ENCODE measurements at regions of chr1 and their contacts with region 1.

Region 1: GRCh38 chr1:228393248-228393699 is 13.4 kb downstream of the TRIM11 start:
- DNase-seq: peak; percentile 82
- H3K4me3 Mint-ChIP-seq: no peak overlapping the region
- H3K27ac Mint-ChIP-seq: peak overlapping the region; percentile 75
- H3K4me1 Mint-ChIP-seq: peaks cover 17% of the 10 kb centered on the region
- H3K27me3 Mint-ChIP-seq: no peaks in the 10 kb centered on the region
- CTCF ChIP-seq: peak; percentile 64

Region 2: DNA sequence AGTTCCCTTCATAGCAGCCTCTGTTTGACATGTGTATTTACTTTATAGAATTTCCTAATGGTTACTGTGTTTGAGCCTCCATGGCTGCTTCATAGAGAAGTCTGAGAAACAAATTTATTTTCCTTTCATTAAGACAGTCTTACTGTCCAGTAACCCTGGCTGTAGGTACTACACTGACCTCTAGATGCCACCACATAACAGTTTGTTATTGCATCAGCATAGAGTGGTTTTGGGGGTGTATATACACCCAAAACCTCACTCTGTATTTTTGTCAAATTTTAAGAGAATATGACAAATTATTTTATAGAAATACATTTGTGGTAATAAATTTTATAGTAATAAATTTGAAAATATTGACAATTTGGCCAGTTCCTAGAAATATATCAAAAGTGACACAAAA is 128.1 kb before region 1 on chr1:
- CTCF ChIA-PET with region 1: interaction called, 3 read pairs
- POLR2A ChIA-PET with region 1: no interaction called
- intact Hi-C with region 1: loop called (anchors 5 kb)
- DNase-seq: peak; percentile 48
- H3K4me3 Mint-ChIP-seq: no peak overlapping the region
- H3K27ac Mint-ChIP-seq: no peak overlapping the region
- H3K4me1 Mint-ChIP-seq: no peaks in the 10 kb centered on the region
- H3K27me3 Mint-ChIP-seq: no peaks in the 10 kb centered on the region
- CTCF ChIP-seq: peak; percentile 63

Region 3: DNA sequence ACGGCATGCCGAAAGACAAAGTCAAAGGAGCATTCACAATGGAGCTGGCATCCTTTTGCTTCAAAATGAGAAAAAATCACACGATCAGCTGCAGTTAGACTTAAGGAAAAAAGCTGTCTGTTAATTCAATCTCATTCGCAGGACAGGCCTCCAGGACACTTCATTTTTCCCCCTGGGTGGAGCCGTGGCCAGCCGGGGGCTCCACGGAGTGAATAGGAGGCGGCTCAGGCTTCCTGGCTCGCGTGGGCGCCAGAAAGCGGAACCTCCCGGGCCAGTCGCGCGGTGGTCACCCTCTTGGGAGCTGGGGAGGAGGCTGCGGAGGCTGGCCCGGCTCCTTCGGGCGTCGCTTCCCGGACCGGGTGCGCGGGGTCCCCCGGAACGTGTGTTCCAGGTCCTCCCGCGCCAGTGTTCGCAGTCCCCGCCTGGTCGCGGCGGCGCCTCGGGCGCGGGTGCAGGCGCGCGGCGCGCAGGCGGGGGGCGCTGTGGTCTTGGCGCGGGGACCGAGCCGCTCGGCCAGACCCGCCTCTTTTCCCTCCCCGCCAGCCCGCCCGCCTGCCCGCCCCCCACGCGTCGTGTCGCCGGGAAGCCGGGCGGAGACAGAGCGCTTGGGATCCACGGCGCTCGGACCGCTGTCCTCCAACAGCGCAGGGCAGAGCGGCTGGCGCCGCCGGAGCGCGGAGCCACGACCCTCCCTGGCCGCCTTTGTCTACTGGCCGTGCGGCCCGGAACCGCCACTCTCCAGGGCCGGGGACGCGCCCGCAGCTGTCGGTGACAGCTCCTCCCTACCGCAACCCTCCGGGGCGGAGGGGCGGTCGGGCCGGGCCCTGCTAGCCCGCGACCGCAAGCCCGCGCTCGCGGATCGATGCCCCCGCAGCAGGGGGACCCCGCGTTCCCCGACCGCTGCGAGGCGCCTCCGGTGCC is 341.9 kb after region 1 on chr1 and contains the start of gene RHOU:
- CTCF ChIA-PET with region 1: no interaction called
- POLR2A ChIA-PET with region 1: no interaction called
- intact Hi-C with region 1: no loop called
- DNase-seq: peak; percentile 55
- H3K4me3 Mint-ChIP-seq: peak within 1 kb of the TSS; percentile 72
- H3K27ac Mint-ChIP-seq: peak within 1 kb of the TSS; percentile 61
- H3K4me1 Mint-ChIP-seq: peaks cover 12% of the 10 kb centered on the region
- H3K27me3 Mint-ChIP-seq: peaks cover 9% of the 10 kb centered on the region
- CTCF ChIP-seq: peak; percentile 98
- total RNA-seq, gene RHOU: 2.1 and 3.6 TPM in 2 replicates